GM10248 (cell line): ENCODE measurements at regions of chr6 and their contacts with region 1.

Region 1: DNA sequence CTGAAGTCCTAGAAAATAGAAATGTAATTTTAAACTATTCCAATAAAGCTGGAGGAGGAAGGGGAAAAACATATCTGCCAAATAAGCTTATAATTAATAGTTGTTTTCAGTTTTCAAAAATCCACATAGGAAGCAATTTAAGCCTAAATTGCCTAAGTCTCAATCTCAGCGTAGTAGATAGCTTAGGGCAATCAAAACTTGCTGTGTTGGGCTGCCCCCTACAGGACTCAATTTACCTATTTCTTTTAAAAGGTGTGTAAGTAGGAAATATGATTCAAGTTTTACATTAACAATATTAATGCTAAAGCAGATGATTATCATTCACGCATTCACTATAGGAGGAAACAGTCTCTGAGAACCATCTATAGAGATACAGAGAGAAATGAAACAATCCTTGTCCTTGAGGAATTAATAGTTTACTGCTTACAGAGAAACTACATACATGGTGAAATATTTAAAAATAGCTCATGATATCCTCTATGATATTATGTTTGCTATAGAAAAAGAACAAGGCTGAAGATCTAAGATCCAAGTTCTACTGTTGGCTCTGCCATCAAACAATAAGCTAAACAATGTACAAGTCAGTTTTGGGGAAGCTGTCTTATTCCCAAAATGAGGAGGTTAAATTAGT is 102.1 kb downstream of the ATG5 start:
- DNase-seq: peak; percentile 30
- CTCF ChIP-seq: peak; percentile 59

Region 2: DNA sequence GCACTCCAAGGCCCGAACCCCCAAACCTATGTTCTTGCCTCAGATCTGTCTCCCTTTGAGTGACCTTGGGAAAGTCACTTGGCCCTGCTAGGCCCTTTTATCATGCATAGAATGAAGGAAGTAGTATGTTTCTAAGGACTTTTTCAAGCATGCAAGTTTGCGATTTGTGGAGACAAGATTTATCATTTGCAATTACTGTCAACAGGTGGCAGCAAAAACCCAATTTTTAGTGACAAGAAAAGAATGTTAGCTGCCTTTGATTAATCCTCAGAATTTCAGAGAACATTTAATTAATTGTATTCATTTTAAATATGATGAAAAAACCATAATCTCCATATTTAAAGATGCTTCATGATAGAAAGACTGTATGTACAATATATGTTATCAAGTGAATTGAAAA is 792.2 kb before region 1 on chr6:
- CTCF ChIA-PET with region 1: interaction called, 45 read pairs
- POLR2A ChIA-PET with region 1: no interaction called
- DNase-seq: peak; percentile 34
- CTCF ChIP-seq: peak; percentile 71

Region 3: DNA sequence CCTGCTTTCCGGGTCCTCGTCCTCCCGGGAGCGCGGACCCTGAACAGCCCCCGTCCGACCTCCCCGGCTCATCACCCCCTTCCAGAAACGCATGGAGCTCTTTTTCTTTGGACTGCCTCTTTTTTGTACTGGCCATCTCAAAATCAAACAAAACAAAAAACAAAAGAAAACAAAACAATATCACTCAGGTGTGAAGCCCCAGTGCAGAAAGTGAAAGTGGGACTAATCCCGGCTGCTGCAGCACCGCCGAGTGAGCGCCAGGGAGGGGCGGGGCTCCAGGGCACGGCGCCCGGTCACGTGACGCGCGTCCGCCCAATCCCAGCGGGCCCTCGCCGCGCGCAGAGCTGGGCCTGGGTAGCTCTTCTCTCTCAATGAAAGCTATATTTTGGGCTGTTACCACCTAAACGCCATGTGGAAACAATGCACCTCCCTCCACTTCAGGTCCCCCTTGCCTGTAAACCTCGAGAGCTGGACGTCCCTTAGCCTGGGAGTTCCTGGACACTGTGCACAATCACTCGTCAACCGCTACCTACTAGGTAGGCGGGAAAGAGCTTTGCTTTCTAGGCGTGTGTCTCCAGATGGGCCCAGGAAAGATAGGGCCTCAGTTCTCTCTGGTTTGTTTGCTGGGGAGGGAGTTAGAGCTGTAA is 231.0 kb before region 1 on chr6:
- CTCF ChIA-PET with region 1: interaction called, 25 read pairs
- POLR2A ChIA-PET with region 1: no interaction called
- DNase-seq: peak; percentile 95
- CTCF ChIP-seq: no peak

Region 4: DNA sequence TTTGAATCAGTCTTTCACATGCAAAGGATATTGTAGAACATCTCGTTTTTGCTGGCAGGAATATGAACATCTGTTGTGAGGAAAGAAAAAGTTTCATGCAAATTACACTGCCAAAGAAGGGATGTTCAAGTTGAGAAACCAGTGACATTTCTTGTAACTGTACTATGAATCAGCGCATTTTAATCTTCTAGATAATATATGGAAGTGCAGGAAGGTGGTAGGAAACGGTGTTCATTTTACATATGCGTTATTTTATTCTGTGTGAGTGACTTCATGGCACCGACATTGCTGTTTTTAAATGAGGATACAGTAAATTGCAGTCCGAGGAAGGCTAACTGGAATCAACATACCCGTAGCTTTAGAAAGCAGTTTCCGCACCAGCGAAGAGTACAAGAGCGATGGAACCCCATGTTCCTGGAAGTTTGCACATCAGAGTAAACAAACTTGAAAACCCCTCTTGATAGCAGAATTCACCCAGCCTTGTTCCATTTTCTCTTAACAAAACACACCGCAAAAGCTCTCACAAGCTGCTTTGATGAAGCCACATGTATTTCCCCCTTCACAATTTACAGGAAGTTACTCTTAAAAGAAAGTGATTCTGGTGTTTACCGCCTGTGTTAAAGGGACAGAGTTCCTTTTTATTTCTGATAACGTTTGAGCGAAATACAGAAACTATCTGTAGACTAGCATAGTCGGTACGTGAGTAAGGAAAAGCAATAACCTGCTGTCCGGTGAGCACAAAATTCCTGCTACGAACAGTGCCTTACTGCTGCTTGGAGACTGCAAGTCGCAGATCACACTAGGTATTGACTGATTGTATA is 125.8 kb before region 1 on chr6:
- CTCF ChIA-PET with region 1: interaction called, 20 read pairs
- POLR2A ChIA-PET with region 1: no interaction called
- DNase-seq: peak; percentile 46
- CTCF ChIP-seq: no peak

Region 5: GRCh38 chr6:106155219-106155830 is 68.1 kb before region 1 on chr6:
- CTCF ChIA-PET with region 1: interaction called, 14 read pairs
- POLR2A ChIA-PET with region 1: no interaction called
- DNase-seq: no peak
- CTCF ChIP-seq: no peak

Region 6: DNA sequence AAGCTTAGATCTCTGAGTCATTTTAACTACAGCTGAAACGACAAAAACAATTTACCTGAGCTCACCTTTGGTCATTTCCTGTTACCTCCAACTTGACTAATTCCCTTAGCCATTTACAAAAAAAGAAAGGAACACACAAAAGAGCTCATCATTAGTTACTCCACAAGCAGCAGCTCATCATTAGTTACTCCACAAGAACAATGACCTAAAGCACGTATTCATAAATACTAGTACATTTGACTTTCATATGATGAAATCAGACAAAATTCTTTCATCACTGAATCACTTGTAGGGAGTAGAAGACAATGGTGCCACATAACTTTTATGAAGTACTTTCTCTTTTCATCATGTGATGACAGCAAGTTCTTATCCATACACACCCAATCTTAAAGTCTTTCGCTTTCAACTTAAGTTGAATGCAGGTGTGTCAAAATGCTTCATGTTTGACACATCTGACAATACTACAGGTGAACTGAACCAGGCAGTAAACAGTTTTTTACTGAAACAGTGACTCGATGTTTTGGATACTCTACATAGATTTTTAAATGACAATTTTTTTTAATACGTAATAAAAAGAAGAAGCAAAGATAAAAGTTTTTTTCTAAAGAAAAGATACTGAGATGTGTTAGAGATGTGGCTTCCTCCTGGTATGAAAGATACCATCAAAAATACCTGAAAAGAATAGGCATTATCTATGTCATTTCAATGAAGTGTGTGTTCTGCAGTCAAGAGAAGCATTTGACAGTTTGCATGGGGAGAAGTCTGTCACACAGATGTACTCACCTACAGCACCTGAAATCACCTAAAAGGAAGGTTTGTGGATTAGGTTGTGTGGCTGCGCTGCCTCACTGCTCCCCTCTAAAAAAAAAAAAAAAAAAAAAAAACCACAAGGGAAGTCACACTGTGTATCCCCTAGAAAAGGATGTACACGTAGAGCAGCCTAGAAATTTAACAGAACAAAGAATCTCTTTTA is 28.2 kb before region 1 on chr6:
- CTCF ChIA-PET with region 1: interaction called, 13 read pairs
- POLR2A ChIA-PET with region 1: no interaction called
- DNase-seq: no peak
- CTCF ChIP-seq: no peak